Left lung (tissue), 14 donors: ENCODE measurements at regions of chr2 and their contacts with region 1.

Region 1: DNA sequence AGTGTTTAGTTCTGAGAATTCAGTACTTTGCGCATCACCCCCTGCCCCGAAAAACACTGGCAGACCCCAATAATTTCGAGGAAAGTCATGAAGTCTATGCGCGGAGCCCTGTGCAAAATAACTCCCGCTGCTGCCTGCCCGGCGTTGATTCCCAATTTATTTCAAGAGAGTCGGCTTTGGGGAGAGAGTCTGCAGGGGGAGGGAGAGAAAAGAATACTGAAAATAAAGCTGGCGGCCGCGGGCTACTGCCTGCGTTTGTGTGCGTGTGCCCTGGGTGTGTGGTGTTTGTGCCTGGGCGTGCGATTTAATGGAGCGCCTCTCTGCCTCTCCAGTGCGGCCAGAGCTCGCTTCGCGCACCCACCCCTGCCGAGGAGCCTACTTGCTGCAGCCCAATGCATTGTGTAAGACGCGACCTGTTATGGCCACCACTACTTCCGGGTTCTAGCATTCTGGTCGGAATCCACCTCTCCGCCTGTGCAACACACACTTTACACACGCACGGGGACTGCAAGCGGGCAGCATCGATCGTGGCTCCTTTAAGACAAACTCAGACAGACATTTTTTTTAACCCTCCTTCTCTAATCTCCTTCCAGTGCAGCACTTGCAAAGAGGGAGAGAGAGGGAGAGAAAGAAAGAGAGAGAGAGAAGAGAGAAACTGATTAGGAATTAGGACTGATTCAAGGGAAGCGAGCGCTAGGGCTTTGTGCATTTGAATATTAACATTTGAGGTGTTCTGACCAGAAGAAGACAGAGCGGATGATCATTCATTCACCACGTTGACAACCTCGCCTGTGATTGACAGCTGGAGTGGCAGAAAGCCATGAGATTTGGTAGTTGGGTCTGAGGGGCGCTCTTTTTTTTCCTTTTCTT is at the start of gene MEIS1:
- DNase-seq: peak; percentile 84 to 97 (median 92)
- ATAC-seq: peak; percentile 85
- H3K4me3 ChIP-seq: peak within 1 kb of the TSS; percentile 52 to 56
- H3K27ac ChIP-seq: peak within 1 kb of the TSS; percentile 84 to 95
- H3K4me1 ChIP-seq: peaks cover 2 to 33% of the 10 kb centered on the region in 2 donors
- H3K27me3 ChIP-seq: peaks cover 32 to 100% of the 10 kb centered on the region in 2 donors
- CTCF ChIP-seq: no peak
- polyA plus RNA-seq, gene MEIS1: 147 to 193 (median 173) TPM

Region 2: DNA sequence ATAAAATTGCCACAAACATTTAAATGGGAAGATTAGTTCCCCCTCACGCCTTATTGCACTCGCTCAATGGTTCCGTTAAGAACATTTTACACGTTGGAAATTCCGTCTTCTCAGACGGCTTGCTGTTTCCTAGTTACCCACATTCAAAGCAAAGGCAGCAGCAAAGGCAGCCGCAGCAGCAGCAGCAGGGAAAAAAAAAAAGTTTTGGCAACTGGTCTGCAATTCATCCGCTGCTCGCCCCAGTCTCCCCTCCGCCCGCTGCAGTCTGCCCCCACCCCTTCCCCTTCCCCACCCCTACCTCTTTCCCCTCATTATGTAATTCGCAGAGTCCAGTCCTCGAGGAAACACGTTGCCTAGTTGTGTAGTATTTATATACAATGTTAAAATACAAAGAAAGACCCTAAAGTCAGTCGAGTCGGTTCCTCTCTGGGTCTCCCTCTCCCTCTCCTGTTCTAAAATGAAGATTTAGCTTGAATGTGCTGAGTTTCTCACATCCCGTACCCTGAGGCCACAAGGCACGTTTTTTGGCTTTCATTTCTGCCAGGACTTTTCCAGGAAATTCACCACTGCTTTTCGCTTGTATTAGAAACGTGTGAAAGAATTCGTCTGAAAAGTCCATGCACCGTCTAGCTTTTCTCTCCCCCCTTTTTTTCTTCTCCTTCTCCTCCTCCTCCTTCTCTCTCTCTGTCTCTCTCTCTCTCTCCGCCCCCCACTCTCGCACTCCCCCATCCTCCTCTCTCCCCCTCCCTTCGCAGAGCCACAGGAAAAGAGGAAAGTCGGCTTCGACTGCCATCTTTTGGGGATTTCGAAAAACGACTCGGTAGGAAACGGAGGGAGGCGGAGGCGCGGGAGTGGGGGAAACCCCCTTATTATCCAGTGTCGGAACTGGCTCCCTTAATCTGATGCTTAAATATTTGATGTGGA is 140.0 kb after region 1 on chr2:
- intact Hi-C with region 1: loop called (anchors 5 to 10 kb)
- DNase-seq: peak in 3 of 4 donors; percentile 64 to 94 (median 89)
- ATAC-seq: peak; percentile 59
- H3K4me3 ChIP-seq: peak overlapping the region; percentile 32 to 35
- H3K27ac ChIP-seq: peak overlapping the region; percentile 53 to 95
- H3K4me1 ChIP-seq: peaks cover 15 to 35% of the 10 kb centered on the region in 2 donors
- H3K27me3 ChIP-seq: peaks cover 50 to 81% of the 10 kb centered on the region in 2 donors
- CTCF ChIP-seq: peak in 1 of 2 donors; percentile 36